ENCODE measurements at regions of chr4 and their contacts with region 1.

Region 1: GRCh38 chr4:24584175-24584850 is at the start of gene DHX15:
- DNase-seq: peak; percentile 91 to 95
- ATAC-seq: peak; percentile 93 to 94
- H3K4me3 ChIP-seq: peak within 1 kb of the TSS; percentile 81 to 98 (median 94)
- H3K27ac ChIP-seq: peak within 1 kb of the TSS; percentile 92 to 99 (median 98)
- H3K4me1 ChIP-seq: peaks cover 29 to 37% of the 10 kb centered on the region in 2 donors
- H3K27me3 ChIP-seq: no peaks in the 10 kb centered on the region
- CTCF ChIP-seq: peak in 3 of 5 experiments; percentile 10 to 11 (median 11)
- POLR2A ChIP-seq: peak; percentile 84 to 86
- total RNA-seq, gene DHX15: 50.1 to 88.1 (median 61.2) TPM

Region 2: GRCh38 chr4:24067367-24068193 is 516.7 kb before region 1 on chr4:
- in situ Hi-C with region 1: no loop called
- intact Hi-C with region 1: loop called (anchors 10 kb)
- DNase-seq: peak; percentile 83 to 89
- ATAC-seq: peak; percentile 100
- H3K4me3 ChIP-seq: peak overlapping the region; percentile 20 to 39 (median 28)
- H3K27ac ChIP-seq: peak overlapping the region; percentile 80 to 89 (median 86)
- H3K4me1 ChIP-seq: peaks cover 5 to 6% of the 10 kb centered on the region in 2 donors
- H3K27me3 ChIP-seq: no peaks in the 10 kb centered on the region
- CTCF ChIP-seq: no peak
- POLR2A ChIP-seq: no peak

Region 3: GRCh38 chr4:24472514-24473308 is 111.6 kb before region 1 on chr4:
- in situ Hi-C with region 1: loop called in 1 of 4 experiments (anchors 10 kb)
- intact Hi-C with region 1: loop called (anchors 1 kb)
- DNase-seq: peak; percentile 79 to 82
- ATAC-seq: peak; percentile 83 to 84
- H3K4me3 ChIP-seq: peak overlapping the region; percentile 67 to 81 (median 71)
- H3K27ac ChIP-seq: peak overlapping the region; percentile 71 to 84 (median 81)
- H3K4me1 ChIP-seq: peaks cover 10 to 20% of the 10 kb centered on the region in 2 donors
- H3K27me3 ChIP-seq: peaks cover 0 to 4% (median 3%) of the 10 kb centered on the region in 3 donors
- CTCF ChIP-seq: peak; percentile 74 to 87 (median 78)
- POLR2A ChIP-seq: peak in 1 of 2 donors; percentile 55

Region 4: DNA sequence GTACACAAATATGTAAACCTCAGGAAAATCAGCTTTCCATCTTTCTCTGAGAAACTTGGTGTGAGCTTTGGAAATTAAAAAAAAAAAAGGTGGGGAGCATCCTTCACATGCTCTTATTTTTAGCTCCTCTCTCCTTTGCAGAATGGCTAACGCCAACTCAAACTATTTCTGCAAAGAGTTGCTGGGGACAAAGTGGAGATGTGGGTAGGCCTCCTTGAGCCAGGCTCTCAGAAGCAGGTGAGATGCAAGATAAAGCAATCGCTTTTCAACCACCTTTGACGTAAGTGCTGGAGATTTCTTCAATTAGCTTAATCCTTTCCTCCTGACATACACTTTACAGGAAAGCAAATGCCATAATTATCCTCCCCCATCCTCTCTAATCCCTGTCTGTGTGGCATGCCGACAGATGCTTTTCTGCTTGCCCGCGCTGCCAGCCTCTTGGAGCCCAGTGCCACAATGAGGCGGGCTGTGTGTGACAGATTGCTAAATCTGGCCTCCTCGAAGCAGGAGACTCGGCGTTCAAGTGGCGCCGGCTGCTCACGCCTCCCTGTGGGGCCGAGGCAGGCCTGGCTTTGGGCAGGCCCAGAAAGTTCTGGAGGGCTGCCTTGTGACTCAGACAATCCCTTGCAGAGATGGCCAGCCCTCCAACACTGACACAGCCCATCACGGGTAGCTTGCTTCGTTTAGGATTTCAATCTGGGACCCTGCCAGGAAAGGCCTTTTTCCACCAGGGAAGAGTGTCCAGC is 146.1 kb after region 1 on chr4:
- in situ Hi-C with region 1: no loop called
- intact Hi-C with region 1: loop called (anchors 2 kb)
- DNase-seq: peak; percentile 81 to 93
- ATAC-seq: peak; percentile 90 to 98
- H3K4me3 ChIP-seq: no peak overlapping the region
- H3K27ac ChIP-seq: peak overlapping the region; percentile 29 to 77 (median 64)
- H3K4me1 ChIP-seq: peaks cover 18 to 19% of the 10 kb centered on the region in 2 donors
- H3K27me3 ChIP-seq: no peaks in the 10 kb centered on the region
- CTCF ChIP-seq: peak in 1 of 5 experiments; percentile 13
- POLR2A ChIP-seq: peak in 1 of 2 donors; percentile 19

Region 5: DNA sequence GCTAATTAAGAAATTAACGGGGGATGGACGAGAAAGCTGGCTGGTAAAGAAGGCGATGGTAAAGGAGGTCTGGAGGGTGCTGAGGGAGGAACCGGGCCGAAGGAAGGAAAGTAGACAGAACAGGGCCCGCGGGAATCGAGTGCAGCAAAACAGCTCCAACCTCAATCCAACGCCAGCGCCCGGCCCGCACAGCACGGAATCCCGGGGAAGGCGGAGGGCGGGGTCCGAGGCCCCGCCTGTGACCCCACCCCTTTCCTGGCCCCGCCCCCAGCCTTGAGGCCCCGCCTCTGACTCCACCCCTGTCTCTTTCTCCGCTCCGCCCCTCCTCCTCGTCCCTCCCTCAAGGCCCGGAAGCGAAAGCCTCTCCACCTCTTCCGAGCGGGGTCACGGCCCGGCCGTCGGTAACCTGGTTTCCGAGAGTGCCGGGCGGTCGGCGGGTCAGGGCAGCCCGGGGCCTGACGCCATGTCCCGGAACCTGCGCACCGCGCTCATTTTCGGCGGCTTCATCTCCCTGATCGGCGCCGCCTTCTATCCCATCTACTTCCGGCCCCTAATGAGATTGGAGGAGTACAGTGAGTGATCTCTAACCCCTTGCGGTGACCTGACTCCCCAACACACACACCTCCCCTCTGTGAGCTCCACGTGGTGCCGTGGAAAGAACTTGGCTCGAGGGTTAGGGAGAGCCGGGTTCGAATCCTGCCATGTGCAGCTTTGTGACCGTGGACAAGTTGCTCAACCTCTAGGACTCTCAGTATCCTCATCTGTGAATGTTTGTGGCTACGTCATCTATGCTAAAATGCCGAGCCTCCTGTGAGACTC is 1329.7 kb after region 1 on chr4 and contains the start of gene SMIM20:
- in situ Hi-C with region 1: loop called in 1 of 4 experiments (anchors 25 kb)
- intact Hi-C with region 1: no loop called
- DNase-seq: peak; percentile 90 to 93
- ATAC-seq: peak; percentile 96 to 97
- H3K4me3 ChIP-seq: peak within 1 kb of the TSS; percentile 72 to 83 (median 76)
- H3K27ac ChIP-seq: peak within 1 kb of the TSS; percentile 87 to 97 (median 90)
- H3K4me1 ChIP-seq: peaks cover 14 to 15% of the 10 kb centered on the region in 2 donors
- H3K27me3 ChIP-seq: no peaks in the 10 kb centered on the region
- CTCF ChIP-seq: no peak
- POLR2A ChIP-seq: peak; percentile 77 to 78
- total RNA-seq, gene SMIM20: 36.4 to 59.4 (median 48.3) TPM

Measured in gastrocnemius medialis (tissue), 4 donors.